ENCODE measurements at regions of chr11 and their contacts with region 1.

Region 1: DNA sequence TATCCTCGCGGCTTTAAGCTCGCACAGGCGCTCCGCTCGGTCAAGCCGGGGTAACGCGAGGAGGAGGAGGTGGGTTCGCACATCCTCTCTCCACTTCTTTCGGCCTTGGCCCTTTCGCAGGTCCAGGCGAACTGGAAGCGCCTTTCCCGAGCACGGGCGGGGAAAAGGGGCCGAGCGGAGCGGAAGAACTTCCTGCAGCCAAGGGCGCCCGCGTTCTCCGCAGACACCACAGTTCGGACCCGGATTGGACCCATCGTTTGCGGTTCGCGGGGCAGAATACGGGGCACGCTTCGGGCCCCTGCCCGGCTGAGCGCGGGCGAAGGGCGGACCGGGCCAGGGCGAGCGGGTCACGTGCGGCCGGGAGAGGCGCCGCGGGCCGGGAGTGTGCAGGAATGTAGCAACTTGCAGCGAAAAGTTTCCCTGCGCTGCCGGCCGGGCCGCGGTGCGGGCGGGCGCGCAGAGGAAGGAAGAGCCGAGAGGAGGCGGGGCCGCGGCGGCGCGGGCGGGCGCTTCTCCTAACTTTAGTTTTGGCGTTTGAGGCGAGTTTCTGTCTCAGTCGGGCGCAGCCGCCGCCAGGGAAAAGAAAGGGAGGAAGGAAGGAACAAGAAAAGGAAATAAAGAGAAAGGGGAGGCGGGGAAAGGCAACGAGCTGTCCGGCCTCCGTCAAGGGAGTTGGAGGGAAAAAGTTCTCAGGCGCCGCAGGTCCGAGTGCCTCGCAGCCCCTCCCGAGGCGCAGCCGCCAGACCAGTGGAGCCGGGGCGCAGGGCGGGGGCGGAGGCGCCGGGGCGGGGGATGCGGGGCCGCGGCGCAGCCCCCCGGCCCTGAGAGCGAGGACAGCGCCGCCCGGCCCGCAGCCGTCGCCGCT is at the start of gene YAP1:
- DNase-seq: peak; percentile 95
- ATAC-seq: peak; percentile 53
- H3K4me3 ChIP-seq: peak within 1 kb of the TSS; percentile 70
- H3K27ac ChIP-seq: peak within 1 kb of the TSS; percentile 87
- H3K4me1 ChIP-seq: peaks cover 26% of the 10 kb centered on the region
- H3K27me3 ChIP-seq: no peaks in the 10 kb centered on the region
- CTCF ChIP-seq: no peak; the same call in 1 of the 2 replicates
- total RNA-seq, gene YAP1: 104 and 118 TPM in 2 replicates

Region 2: DNA sequence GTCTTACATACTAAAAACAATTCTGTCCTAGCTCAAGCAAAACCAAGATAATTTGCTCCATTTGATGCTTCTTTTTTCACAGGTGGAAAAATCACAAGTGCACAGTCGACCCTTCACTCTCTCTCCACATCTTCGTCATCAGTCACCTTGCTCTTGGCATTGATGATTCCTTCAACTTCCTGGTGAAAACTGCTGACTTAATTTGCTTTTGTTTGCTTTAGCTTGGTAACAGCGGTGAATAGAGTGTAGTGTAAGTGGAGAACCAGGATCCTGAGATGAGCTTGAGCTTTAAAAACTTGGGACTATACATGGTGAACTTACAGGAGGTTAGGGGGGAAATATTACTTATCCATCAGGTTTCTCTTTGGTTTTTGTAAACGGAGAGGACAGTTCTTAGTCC is 1754.1 kb before region 1 on chr11:
- CTCF ChIA-PET with region 1: no interaction called
- POLR2A ChIA-PET with region 1: interaction called, 14 read pairs
- intact Hi-C with region 1: no loop called
- DNase-seq: no peak
- ATAC-seq: no peak
- H3K4me3 ChIP-seq: no peak overlapping the region
- H3K27ac ChIP-seq: no peak overlapping the region
- H3K4me1 ChIP-seq: no peaks in the 10 kb centered on the region
- H3K27me3 ChIP-seq: peaks cover 16% of the 10 kb centered on the region
- CTCF ChIP-seq: no peak

Region 3: GRCh38 chr11:101860696-101861427 is 249.3 kb before region 1 on chr11:
- CTCF ChIA-PET with region 1: no interaction called
- POLR2A ChIA-PET with region 1: no interaction called
- intact Hi-C with region 1: loop called (anchors 5 kb)
- DNase-seq: peak; percentile 90
- ATAC-seq: peak; percentile 79
- H3K4me3 ChIP-seq: no peak overlapping the region
- H3K27ac ChIP-seq: no peak overlapping the region
- H3K4me1 ChIP-seq: peaks cover 31% of the 10 kb centered on the region
- H3K27me3 ChIP-seq: no peaks in the 10 kb centered on the region
- CTCF ChIP-seq: peak; percentile 91

Region 4: DNA sequence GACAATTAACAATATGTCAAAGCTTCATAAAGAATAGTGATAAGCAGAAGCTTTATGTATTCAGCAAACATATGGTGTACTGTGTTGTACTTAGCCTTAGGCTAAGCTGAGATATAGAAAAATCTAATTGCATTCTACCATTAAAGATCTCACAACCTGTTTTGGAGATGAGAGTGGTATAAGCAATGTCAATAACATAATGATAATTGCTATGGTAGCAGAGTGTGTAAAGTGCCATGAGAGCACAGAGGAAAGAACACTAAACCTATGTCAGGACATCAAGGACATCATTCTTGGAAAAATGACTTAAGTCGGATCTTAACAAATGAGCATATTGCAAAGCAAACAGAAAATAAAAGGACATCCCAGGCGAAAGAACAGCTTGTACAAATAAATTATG is 165.2 kb before region 1 on chr11:
- CTCF ChIA-PET with region 1: no interaction called
- POLR2A ChIA-PET with region 1: no interaction called
- intact Hi-C with region 1: no loop called
- DNase-seq: no peak
- ATAC-seq: no peak
- H3K4me3 ChIP-seq: no peak overlapping the region
- H3K27ac ChIP-seq: no peak overlapping the region
- H3K4me1 ChIP-seq: no peaks in the 10 kb centered on the region
- H3K27me3 ChIP-seq: no peaks in the 10 kb centered on the region
- CTCF ChIP-seq: no peak

Region 5: GRCh38 chr11:102007567-102008437 is 102.3 kb before region 1 on chr11:
- CTCF ChIA-PET with region 1: interaction called, 7 read pairs
- POLR2A ChIA-PET with region 1: interaction called, 12 read pairs
- intact Hi-C with region 1: loop called (anchors 1 kb)
- DNase-seq: peak; percentile 96
- ATAC-seq: peak; percentile 75
- H3K4me3 ChIP-seq: peak overlapping the region; percentile 41
- H3K27ac ChIP-seq: peak overlapping the region; percentile 90
- H3K4me1 ChIP-seq: peaks cover 61% of the 10 kb centered on the region
- H3K27me3 ChIP-seq: no peaks in the 10 kb centered on the region
- CTCF ChIP-seq: peak; percentile 85

Region 6: DNA sequence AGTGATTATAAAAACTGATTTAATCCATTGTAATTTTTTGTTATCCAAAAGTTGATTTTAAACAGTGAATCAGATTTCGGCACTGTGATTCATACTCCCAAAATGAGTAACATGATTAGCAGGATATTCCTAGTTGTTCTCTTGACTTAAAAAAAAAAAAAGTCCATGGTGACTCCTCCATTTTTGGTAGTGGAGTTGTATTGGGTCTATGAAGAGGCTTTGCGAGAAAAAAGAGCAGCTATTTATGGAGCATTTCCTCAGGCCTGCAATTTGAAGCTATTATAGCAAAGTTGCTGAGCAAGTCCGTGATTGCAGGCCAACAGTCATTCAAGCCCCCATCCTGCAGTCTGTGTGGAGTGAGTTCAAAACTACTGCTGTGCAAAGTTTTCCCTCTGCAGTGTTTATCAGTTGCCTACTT is 29.0 kb after region 1 on chr11:
- CTCF ChIA-PET with region 1: no interaction called
- POLR2A ChIA-PET with region 1: no interaction called
- intact Hi-C with region 1: no loop called
- DNase-seq: peak; percentile 89
- ATAC-seq: peak; percentile 80
- H3K4me3 ChIP-seq: peak overlapping the region; percentile 48
- H3K27ac ChIP-seq: peak overlapping the region; percentile 85
- H3K4me1 ChIP-seq: peaks cover 25% of the 10 kb centered on the region
- H3K27me3 ChIP-seq: no peaks in the 10 kb centered on the region
- CTCF ChIP-seq: no peak

Region 7: DNA sequence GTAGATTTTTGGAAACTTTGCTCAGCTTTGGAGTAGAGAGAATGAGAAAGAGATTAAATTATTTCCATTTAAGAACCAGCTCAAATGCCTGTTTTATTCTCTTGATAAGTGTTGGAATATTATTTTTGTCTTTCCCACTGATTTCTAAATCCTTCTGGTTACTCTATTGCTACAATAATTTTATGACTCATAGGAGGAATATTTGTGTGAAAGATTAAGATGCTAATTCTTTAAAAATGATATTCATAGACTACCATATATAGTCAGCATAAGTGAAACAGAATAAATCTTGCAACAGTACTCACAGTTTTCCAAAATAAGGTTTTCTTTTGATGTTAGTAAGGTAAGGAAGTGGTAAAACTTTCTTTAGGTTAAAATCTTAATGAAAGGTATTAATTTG is 61.0 kb after region 1 on chr11:
- CTCF ChIA-PET with region 1: no interaction called
- POLR2A ChIA-PET with region 1: interaction called, 5 read pairs
- intact Hi-C with region 1: loop called (anchors 1 kb)
- DNase-seq: peak; percentile 84
- ATAC-seq: peak; percentile 61
- H3K4me3 ChIP-seq: peak overlapping the region; percentile 21
- H3K27ac ChIP-seq: peak overlapping the region; percentile 54
- H3K4me1 ChIP-seq: peaks cover 51% of the 10 kb centered on the region
- H3K27me3 ChIP-seq: no peaks in the 10 kb centered on the region
- CTCF ChIP-seq: no peak

Region 8: GRCh38 chr11:102225689-102226568 is 115.8 kb after region 1 on chr11:
- CTCF ChIA-PET with region 1: no interaction called
- POLR2A ChIA-PET with region 1: no interaction called
- intact Hi-C with region 1: loop called (anchors 2 kb)
- DNase-seq: peak; percentile 87
- ATAC-seq: peak; percentile 93
- H3K4me3 ChIP-seq: peak overlapping the region; percentile 51
- H3K27ac ChIP-seq: peak overlapping the region; percentile 64
- H3K4me1 ChIP-seq: peaks cover 47% of the 10 kb centered on the region
- H3K27me3 ChIP-seq: no peaks in the 10 kb centered on the region
- CTCF ChIP-seq: no peak

Region 9: GRCh38 chr11:102346748-102347461 is 236.8 kb after region 1 on chr11 and contains the start of gene BIRC2:
- CTCF ChIA-PET with region 1: no interaction called
- POLR2A ChIA-PET with region 1: no interaction called
- intact Hi-C with region 1: loop called (anchors 2 kb)
- DNase-seq: peak; percentile 99
- ATAC-seq: peak; percentile 78
- H3K4me3 ChIP-seq: peak within 1 kb of the TSS; percentile 88
- H3K27ac ChIP-seq: peak within 1 kb of the TSS; percentile 90
- H3K4me1 ChIP-seq: peaks cover 34% of the 10 kb centered on the region
- H3K27me3 ChIP-seq: no peaks in the 10 kb centered on the region
- CTCF ChIP-seq: peak; percentile 77
- total RNA-seq, gene BIRC2: 36.1 and 42.6 TPM in 2 replicates

Measured in PC-3 (cell line).